ENCODE measurements at regions of chr1 and their contacts with region 1.

Region 1: GRCh38 chr1:24727501-24728216 is 17.6 kb upstream of the CLIC4 start:
- DNase-seq: no peak
- ATAC-seq: no peak
- H3K4me3 ChIP-seq: peak overlapping the region; percentile 22 to 55 (median 42); a peak in 4 of 6 replicates
- H3K27ac ChIP-seq: no peak overlapping the region
- H3K4me1 ChIP-seq: peaks cover 79% of the 10 kb centered on the region
- H3K27me3 ChIP-seq: no peaks in the 10 kb centered on the region
- CTCF ChIP-seq: no peak
- EP300 ChIP-seq: no peak
- POLR2A ChIP-seq: no peak
- RAD21 ChIP-seq: no peak

Region 2: DNA sequence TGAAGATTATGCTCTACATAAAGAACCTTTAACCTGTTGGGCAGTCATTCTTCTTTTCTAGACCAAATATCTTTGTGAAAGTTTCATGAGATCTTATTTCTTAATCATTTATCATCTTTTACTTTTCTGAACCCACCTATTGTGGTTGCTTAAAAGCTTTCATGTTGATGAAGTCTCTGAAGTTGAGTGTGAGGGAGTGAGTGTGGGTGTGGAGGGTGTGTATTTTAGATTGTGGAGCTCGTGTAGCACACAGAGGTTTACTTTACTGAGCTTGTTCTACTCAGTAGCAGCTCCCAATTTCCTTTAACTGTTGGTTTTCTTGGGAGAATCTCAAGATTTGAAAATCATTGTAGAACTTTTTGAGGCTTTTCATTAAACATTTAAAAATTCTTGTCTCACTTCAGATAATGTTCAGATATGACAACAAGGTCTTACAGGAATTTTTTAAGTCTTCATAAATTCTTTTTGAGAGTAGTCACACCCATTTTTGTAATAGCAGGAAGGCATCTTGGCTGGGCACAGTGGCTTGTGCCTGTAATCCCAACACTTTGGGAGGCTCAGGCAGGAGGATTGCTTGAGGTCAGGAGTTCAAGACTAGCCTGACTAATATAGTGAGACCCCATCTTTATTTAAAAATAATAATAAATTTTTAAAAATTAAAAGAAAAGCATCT is 67.5 kb before region 1 on chr1:
- CTCF ChIA-PET with region 1: no interaction called
- POLR2A ChIA-PET with region 1: no interaction called
- in situ Hi-C with region 1: no loop called
- intact Hi-C with region 1: no loop called
- DNase-seq: no peak
- ATAC-seq: no peak
- H3K4me3 ChIP-seq: no peak overlapping the region
- H3K27ac ChIP-seq: no peak overlapping the region
- H3K4me1 ChIP-seq: peaks cover 21% of the 10 kb centered on the region
- H3K27me3 ChIP-seq: no peaks in the 10 kb centered on the region
- CTCF ChIP-seq: no peak
- EP300 ChIP-seq: no peak
- POLR2A ChIP-seq: no peak
- RAD21 ChIP-seq: no peak

Region 3: DNA sequence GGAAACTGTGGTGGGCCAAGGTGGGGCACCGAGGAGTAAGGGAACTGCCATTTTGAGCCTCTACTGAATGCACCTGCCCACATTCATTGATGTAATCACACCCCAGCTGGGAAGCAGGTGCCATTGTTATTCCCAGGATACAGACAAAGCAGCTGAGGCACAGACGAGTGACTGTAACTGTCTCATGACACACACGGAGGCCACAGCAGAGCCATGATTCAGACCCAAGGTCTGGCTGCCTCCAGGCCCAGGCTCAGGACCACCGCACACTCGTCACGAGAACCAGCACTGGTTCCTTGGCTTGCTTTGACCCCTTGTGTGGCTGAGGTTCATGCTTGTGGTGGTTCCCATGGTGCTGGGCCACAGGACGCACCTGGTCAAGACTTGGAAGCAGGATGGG is 28.0 kb before region 1 on chr1:
- CTCF ChIA-PET with region 1: no interaction called
- POLR2A ChIA-PET with region 1: interaction called, 10 read pairs
- in situ Hi-C with region 1: no loop called
- intact Hi-C with region 1: no loop called
- DNase-seq: no peak
- ATAC-seq: no peak
- H3K4me3 ChIP-seq: no peak overlapping the region
- H3K27ac ChIP-seq: no peak overlapping the region
- H3K4me1 ChIP-seq: peaks cover 60% of the 10 kb centered on the region
- H3K27me3 ChIP-seq: peaks cover 2 to 4% of the 10 kb centered on the region in 2 experiments; a peak in 1 of 5 replicates
- CTCF ChIP-seq: no peak
- EP300 ChIP-seq: no peak
- POLR2A ChIP-seq: no peak
- RAD21 ChIP-seq: no peak

Region 4: GRCh38 chr1:24705260-24706073 is 22.2 kb before region 1 on chr1:
- CTCF ChIA-PET with region 1: no interaction called
- POLR2A ChIA-PET with region 1: interaction called, 84 read pairs
- in situ Hi-C with region 1: no loop called
- intact Hi-C with region 1: loop called (anchors 1 kb)
- DNase-seq: peak; percentile 98
- ATAC-seq: peak; percentile 99
- H3K4me3 ChIP-seq: peak overlapping the region; percentile 31 to 47 (median 41)
- H3K27ac ChIP-seq: peak overlapping the region; percentile 79
- H3K4me1 ChIP-seq: peaks cover 62% of the 10 kb centered on the region
- H3K27me3 ChIP-seq: no peaks in the 10 kb centered on the region
- CTCF ChIP-seq: no peak
- EP300 ChIP-seq: peak in 1 of 2 experiments; percentile 44; a peak in 1 of 4 replicates
- POLR2A ChIP-seq: peak; percentile 50 to 56; a peak in 3 of 4 replicates
- RAD21 ChIP-seq: 0 out of 2 replicates have a peak, but pooled peaks have one; percentile 23

Region 5: GRCh38 chr1:24714859-24715520 is 12.7 kb before region 1 on chr1:
- CTCF ChIA-PET with region 1: no interaction called
- POLR2A ChIA-PET with region 1: interaction called, 22 read pairs
- in situ Hi-C with region 1: no loop called
- intact Hi-C with region 1: no loop called
- DNase-seq: peak; percentile 49
- ATAC-seq: peak; percentile 42
- H3K4me3 ChIP-seq: no peak overlapping the region
- H3K27ac ChIP-seq: no peak overlapping the region
- H3K4me1 ChIP-seq: peaks cover 88% of the 10 kb centered on the region
- H3K27me3 ChIP-seq: no peaks in the 10 kb centered on the region
- CTCF ChIP-seq: no peak
- EP300 ChIP-seq: no peak
- POLR2A ChIP-seq: no peak
- RAD21 ChIP-seq: no peak

Region 6: GRCh38 chr1:24803987-24804530 is 76.4 kb after region 1 on chr1:
- CTCF ChIA-PET with region 1: no interaction called
- POLR2A ChIA-PET with region 1: no interaction called
- in situ Hi-C with region 1: no loop called
- intact Hi-C with region 1: no loop called
- DNase-seq: no peak
- ATAC-seq: no peak
- H3K4me3 ChIP-seq: no peak overlapping the region
- H3K27ac ChIP-seq: no peak overlapping the region
- H3K4me1 ChIP-seq: peaks cover 13% of the 10 kb centered on the region
- H3K27me3 ChIP-seq: no peaks in the 10 kb centered on the region
- CTCF ChIP-seq: no peak
- EP300 ChIP-seq: no peak
- POLR2A ChIP-seq: no peak
- RAD21 ChIP-seq: no peak

Measured in HepG2 (cell line).